Endothelial cell of umbilical vein (primary cell): ENCODE measurements at regions of chr2 and their contacts with region 1.

Region 1: DNA sequence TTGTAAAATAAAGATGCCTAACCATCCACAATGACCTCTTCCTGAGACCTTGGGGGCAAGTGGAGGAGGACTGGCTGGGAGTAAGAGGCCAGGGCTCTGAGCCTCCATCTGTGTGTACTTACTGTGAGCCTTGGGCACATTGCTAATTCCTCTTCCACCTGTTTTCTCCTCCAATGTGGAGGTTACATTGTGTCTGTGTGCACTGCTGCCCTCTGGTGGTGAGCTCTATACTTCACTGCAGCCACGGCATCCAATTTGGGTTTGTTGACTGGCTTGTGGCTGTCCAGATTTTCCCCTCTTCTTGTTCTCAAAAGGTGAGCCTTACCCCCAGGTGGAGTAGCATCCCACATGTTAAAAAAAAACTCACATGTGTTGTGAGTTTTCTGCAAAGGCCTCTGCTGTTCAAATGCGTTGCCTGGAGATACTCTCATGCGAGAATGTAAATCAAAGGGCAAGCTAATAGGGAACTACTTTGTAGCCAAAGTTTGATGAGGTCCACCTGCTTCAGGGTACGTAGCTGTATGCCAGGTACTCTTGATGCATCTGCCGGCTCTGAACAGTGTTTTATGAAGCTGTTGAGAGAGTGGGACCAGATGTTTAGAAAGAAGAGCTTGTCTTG is 80.8 kb downstream of the APOB start:
- DNase-seq: peak; percentile 67
- H3K4me3 ChIP-seq: no peak overlapping the region
- H3K27ac ChIP-seq: no peak overlapping the region
- H3K4me1 ChIP-seq: no peaks in the 10 kb centered on the region
- H3K27me3 ChIP-seq: peaks cover 2 to 5% of the 10 kb centered on the region in 2 experiments
- CTCF ChIP-seq: peak; percentile 74 to 80
- POLR2A ChIP-seq: no peak

Region 2: GRCh38 chr2:20666304-20667150 is 296.5 kb before region 1 on chr2 and contains the start of gene GDF7:
- CTCF ChIA-PET with region 1: interaction called, 531 read pairs
- POLR2A ChIA-PET with region 1: interaction called, 6 read pairs
- dilution Hi-C with region 1: no loop called
- intact Hi-C with region 1: loop called (anchors 1 kb)
- DNase-seq: peak; percentile 79
- H3K4me3 ChIP-seq: peak within 1 kb of the TSS; percentile 19 to 46 (median 26)
- H3K27ac ChIP-seq: no peak within 1 kb of the TSS
- H3K4me1 ChIP-seq: peaks cover 16% of the 10 kb centered on the region
- H3K27me3 ChIP-seq: peaks cover 58 to 80% of the 10 kb centered on the region in 2 experiments
- CTCF ChIP-seq: peak in 1 of 2 donors; percentile 48
- POLR2A ChIP-seq: no peak
- total RNA-seq, gene GDF7: 1.1 and 3.7 TPM in 2 replicates

Region 3: GRCh38 chr2:20682167-20682920 is 280.7 kb before region 1 on chr2:
- CTCF ChIA-PET with region 1: interaction called, 58 read pairs
- POLR2A ChIA-PET with region 1: no interaction called
- dilution Hi-C with region 1: no loop called
- intact Hi-C with region 1: loop called (anchors 1 kb)
- DNase-seq: peak; percentile 46
- H3K4me3 ChIP-seq: no peak overlapping the region
- H3K27ac ChIP-seq: no peak overlapping the region
- H3K4me1 ChIP-seq: peaks cover 5% of the 10 kb centered on the region
- H3K27me3 ChIP-seq: no peaks in the 10 kb centered on the region
- CTCF ChIP-seq: peak; percentile 58 to 75
- POLR2A ChIP-seq: no peak

Region 4: DNA sequence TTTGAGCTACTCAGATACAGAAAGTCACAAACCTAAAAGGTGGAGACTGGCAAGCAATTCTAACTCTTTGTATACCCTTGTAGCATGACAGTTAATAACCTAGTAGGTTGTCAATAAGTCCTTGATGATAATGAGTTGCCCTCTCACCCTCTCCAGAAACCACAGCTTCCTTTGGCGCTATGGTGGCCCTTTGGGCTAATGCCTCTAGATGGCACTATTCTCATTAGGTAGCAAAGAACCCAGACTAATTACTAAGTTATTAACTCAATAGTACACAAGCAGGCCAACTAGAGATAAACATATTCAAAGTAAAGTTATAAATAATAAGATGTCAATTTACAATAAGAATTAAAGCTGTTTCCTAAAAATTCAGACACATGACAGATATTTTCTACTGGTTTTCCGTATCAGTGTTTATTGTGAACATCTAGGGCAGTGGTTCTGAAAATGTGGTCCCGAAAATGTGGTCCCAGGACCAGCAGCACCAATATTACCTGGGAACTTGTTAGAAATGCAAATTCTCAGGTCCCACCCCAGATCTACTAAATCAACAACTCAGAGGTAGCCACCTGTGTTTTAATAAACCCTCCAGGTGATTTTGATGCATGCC is 181.3 kb before region 1 on chr2:
- CTCF ChIA-PET with region 1: interaction called, 68 read pairs
- POLR2A ChIA-PET with region 1: no interaction called
- dilution Hi-C with region 1: no loop called
- intact Hi-C with region 1: loop called (anchors 1 kb)
- DNase-seq: peak; percentile 38
- H3K4me3 ChIP-seq: no peak overlapping the region
- H3K27ac ChIP-seq: no peak overlapping the region
- H3K4me1 ChIP-seq: no peaks in the 10 kb centered on the region
- H3K27me3 ChIP-seq: no peaks in the 10 kb centered on the region
- CTCF ChIP-seq: peak; percentile 54 to 68
- POLR2A ChIP-seq: no peak

Region 5: GRCh38 chr2:20888216-20888615 is 74.8 kb before region 1 on chr2:
- CTCF ChIA-PET with region 1: no interaction called
- POLR2A ChIA-PET with region 1: no interaction called
- dilution Hi-C with region 1: no loop called
- intact Hi-C with region 1: no loop called
- DNase-seq: no peak
- H3K4me3 ChIP-seq: no peak overlapping the region
- H3K27ac ChIP-seq: no peak overlapping the region
- H3K4me1 ChIP-seq: no peaks in the 10 kb centered on the region
- H3K27me3 ChIP-seq: no peaks in the 10 kb centered on the region
- CTCF ChIP-seq: no peak
- POLR2A ChIP-seq: no peak

Region 6: DNA sequence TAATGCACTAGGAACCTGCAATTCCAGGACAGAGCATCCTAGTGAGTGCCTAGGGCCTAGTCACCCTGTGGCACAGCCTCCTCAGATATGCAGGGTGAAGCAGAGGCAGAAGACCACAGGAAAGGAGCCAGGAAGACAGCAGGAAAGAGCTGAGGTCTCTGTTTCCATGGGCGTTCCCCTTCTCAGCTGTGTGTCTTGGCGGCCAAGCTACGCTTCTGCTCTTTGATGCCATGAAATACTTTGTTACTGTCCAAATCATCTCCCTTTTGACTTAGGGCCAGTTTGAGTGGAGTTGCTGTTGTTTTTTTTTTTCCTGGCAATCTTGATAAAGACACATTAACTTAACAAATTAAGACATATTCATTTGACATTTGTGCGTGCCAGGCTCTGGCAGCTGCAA is 13.5 kb after region 1 on chr2:
- CTCF ChIA-PET with region 1: interaction called, 42 read pairs
- POLR2A ChIA-PET with region 1: no interaction called
- dilution Hi-C with region 1: no loop called
- intact Hi-C with region 1: no loop called
- DNase-seq: no peak
- H3K4me3 ChIP-seq: no peak overlapping the region
- H3K27ac ChIP-seq: no peak overlapping the region
- H3K4me1 ChIP-seq: no peaks in the 10 kb centered on the region
- H3K27me3 ChIP-seq: no peaks in the 10 kb centered on the region
- CTCF ChIP-seq: no peak
- POLR2A ChIP-seq: no peak

Region 7: DNA sequence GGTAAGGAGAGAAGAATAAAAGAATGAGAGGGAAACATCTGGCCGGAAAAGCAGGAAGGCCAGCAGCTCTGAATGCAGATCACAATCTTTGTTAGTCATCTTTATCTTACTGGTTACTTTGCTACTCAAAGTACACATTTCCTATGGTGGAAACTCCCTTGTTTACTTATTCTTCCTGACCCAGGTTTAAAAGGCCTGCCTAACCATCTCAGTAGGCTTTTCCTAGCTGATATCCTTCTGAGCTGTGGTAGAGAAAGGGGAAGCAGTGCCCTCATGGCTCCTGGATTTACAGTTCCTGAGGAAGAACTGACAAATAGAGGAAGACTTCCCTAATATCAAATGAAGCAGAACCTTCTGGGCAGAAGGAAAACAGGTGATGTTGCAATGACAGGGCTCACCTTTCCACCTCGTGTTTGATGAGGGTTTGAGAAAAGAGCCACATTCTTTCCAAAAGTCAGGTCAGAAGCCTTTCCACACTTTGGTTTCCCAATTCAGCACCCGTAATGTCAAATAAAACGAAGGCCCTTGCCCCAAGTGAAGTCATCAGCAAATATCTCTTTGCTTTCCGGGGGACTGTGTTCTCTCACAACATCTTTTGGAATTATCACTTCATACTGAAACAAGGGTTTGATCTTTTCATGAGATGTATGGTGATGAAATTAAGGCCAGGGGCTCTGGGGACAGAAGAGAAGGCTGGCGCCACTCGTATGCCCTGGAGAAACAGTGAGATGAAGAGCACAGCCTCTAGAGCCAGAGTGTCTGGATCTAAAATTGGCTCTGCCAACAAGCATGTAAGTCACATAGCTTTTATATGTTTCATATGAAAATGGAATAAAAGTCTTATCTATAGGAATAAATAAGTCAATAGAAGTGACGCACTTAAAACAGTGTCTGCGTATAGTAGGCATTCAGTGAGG is 107.6 kb after region 1 on chr2:
- CTCF ChIA-PET with region 1: no interaction called
- POLR2A ChIA-PET with region 1: no interaction called
- dilution Hi-C with region 1: no loop called
- intact Hi-C with region 1: no loop called
- DNase-seq: peak; percentile 84
- H3K4me3 ChIP-seq: no peak overlapping the region
- H3K27ac ChIP-seq: peak overlapping the region; percentile 66
- H3K4me1 ChIP-seq: peaks cover 14% of the 10 kb centered on the region
- H3K27me3 ChIP-seq: no peaks in the 10 kb centered on the region
- CTCF ChIP-seq: no peak
- POLR2A ChIP-seq: peak; percentile 50